Head of caudate nucleus (tissue), 42 donors: ENCODE measurements at regions of chr11 and their contacts with region 1.

Region 1: DNA sequence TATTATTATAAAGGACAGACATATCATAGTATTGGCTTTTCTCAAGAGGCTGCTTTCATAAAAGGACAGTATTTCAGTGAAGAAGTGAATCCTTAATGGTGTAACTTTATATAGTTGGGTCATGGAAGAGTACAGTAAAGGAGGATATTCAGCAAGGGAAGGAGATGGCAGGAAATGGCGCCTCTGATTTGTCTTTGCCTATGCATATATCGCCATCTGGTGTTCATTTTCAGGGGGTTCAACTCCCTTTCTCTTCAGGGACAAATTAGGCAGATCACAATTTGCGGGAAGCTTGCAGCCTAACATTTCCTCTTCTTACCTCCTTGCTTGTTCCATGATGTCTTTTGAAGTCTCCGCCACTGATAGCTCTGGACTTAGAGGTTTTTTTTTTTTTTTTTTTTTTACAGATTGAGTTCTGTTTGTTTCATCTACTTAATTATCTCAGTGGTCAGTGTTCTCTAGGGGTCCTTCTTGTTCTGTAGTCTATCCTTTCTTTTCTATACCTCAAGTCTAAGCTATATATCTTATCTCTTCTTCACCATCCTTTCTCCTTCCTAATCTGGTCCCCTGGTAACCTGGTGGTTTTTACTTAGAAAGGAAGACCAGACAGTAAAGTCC is 21.8 kb upstream of the RRM1 start:
- DNase-seq: peak in 35 of 42 donors; percentile 26 to 88 (median 68)

Region 2: DNA sequence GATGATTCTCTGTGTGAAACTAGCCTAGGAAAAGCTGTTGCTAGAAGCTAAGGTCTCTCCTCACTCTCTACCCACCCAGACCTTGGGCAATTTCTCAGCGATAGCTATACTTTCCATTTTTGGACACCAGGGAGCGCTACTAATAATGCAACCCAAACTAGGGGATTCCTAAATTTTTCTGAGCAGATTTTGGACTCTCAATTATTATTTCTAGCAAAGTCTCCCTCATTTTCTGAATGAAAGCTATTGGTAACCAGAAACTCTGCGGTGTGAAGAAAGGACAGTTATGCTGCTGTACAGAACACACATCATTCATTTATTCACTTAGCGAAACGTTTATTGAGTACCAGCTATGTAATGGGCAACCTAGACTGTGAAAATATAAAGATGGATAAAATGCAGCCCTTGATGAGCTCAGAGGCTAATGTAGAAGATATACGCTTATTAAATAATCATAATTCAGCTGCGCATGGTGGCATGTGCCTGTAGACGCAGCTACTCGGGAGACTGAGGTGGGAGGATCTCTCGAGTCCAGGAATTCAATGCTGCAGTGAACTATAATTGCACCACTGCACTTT is 223.4 kb before region 1 on chr11:
- intact Hi-C with region 1: loop called (anchors 2 kb)
- DNase-seq: peak in 11 of 42 donors; percentile 41 to 77 (median 51)

Region 3: DNA sequence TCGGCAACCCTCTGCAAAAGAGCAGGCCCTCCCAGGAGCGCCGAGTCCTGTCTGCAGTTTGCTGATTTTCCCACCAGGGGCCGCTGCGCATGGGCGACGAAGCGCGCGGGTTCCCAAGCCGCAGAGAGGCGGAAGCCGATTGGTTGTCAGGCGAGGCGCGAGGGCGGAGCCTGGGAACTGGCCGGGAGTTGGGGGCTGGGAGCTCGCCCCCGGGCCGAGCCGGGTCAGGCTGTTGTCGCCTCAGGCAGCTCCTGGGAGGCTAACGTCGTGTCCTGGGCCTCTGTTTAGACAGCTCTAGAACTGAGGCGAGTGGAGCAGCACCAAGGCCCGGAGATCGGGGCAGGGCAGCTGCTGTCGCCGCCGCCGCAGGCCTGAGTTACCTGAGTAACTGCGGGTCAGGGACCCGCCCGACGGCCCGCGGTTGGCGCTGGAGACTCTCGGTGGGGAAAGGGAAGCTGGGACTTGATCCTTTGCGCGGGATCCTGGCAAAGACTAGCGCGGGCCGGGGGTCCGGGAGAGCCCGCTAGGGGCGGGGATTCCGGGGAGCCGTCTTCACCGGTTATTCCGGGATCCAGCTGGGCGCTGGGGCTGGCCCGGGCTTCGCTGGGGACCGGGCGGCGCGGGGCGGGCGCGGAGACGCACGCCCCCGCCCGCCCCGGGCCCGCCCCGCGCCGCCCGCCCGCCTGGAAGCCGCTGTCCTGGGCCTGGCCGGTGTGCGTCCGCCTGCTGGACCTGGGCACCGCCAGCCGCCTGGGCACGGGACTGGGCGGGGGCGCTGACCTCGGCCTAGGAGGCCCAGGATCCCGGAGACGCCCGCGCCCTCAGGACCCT is 217.6 kb before region 1 on chr11 and contains the start of gene STIM1:
- intact Hi-C with region 1: loop called (anchors 2 kb)
- DNase-seq: peak; percentile 86 to 99 (median 96)